Activated CD8-positive, alpha-beta memory T cell treated with anti-CD3 and anti-CD28 coated beads, Interleukin-2, amount 10 ng/mL, durations not matched to agents 7 days and 5 days (primary cell): ENCODE measurements at regions of chr17 and their contacts with region 1.

Region 1: DNA sequence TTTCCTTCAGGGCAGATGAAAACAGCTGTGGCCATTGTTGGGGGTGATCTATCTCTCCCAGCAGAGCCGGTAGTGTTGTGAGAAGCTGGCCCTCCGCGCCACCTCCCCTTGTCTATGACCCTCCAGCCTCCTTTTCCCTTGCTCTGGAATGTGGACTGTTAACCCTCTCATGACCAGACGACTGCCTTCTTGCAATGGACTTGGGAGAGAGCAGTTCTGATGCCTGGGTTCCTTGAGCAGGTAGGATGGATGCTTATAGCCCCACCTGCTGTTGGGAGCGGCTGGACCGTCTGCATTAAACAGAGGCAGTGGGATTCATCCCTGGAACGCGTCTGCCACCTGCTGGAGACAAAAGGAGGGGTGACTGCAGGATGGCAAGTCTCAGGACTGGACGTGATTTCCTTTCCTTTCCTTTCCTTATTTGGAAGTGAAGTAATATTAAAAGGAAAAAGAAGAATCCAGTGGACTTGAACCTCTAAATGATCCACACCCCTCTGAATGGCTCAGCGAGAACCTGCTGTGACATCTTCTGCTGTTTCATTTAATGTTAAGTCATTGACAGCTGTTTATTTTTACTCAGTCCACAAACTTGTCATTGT is 1.8 kb upstream of the SOST start:
- DNase-seq: peak; percentile 94
- ATAC-seq: peak; percentile 94
- H3K4me3 Mint-ChIP-seq: no peak overlapping the region
- H3K27ac Mint-ChIP-seq: no peak overlapping the region
- H3K4me1 Mint-ChIP-seq: no peaks in the 10 kb centered on the region
- H3K27me3 Mint-ChIP-seq: peaks cover 30% of the 10 kb centered on the region

Region 2: GRCh38 chr17:43576563-43577229 is 183.7 kb before region 1 on chr17:
- CTCF ChIA-PET with region 1: interaction called, 28 read pairs
- DNase-seq: peak; percentile 70
- ATAC-seq: peak; percentile 85
- H3K4me3 Mint-ChIP-seq: no peak overlapping the region
- H3K27ac Mint-ChIP-seq: no peak overlapping the region
- H3K4me1 Mint-ChIP-seq: peaks cover 16% of the 10 kb centered on the region
- H3K27me3 Mint-ChIP-seq: peaks cover 5% of the 10 kb centered on the region

Region 3: GRCh38 chr17:43713494-43714162 is 46.7 kb before region 1 on chr17:
- CTCF ChIA-PET with region 1: interaction called, 569 read pairs
- DNase-seq: peak; percentile 44
- ATAC-seq: peak; percentile 88
- H3K4me3 Mint-ChIP-seq: peak overlapping the region; percentile 42
- H3K27ac Mint-ChIP-seq: no peak overlapping the region
- H3K4me1 Mint-ChIP-seq: peaks cover 13% of the 10 kb centered on the region
- H3K27me3 Mint-ChIP-seq: peaks cover 58% of the 10 kb centered on the region

Region 4: GRCh38 chr17:43832976-43833829 is 72.8 kb after region 1 on chr17 and contains the start of gene MPP3:
- CTCF ChIA-PET with region 1: no interaction called
- DNase-seq: no peak
- ATAC-seq: peak; percentile 78
- H3K4me3 Mint-ChIP-seq: peak within 1 kb of the TSS; percentile 49
- H3K27ac Mint-ChIP-seq: no peak within 1 kb of the TSS
- H3K4me1 Mint-ChIP-seq: peaks cover 13% of the 10 kb centered on the region
- H3K27me3 Mint-ChIP-seq: peaks cover 63% of the 10 kb centered on the region
- total RNA-seq, gene MPP3: not detected